PC-9 (cell line): ENCODE measurements at regions of chr5 and their contacts with region 1.

Region 1: DNA sequence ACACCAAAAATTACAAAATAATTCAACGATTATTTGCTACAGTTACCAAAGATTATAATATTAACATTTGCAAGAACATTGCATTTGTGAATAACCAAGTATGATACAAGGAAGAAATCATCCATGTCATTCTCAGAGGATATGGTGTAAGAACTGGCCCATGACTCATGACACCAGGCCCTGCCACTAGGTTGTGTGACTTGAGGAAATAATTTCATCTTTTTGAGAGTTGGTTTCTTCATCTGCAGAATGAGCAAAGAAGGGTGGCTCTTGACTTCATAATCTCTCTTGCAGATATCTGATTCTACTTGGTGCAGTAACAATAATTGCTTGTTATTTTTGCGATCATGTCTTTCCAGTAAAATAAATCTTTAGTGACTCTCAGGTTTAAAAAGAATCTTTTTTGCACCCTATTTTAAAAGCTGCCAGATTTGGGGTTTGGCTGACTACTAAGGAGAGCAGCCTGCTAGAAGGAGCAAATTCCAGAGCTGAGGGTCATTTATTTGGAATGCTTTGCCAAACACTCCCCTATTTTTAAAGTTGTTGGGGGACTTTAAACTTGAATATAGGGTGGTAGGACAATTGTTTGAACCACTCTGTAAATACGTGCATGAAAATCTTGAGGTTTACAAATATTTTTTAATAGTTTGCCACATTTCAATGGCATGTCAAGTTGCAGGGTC is 23.5 kb downstream of the ITGA1 start:
- DNase-seq: peak; percentile 28 to 87
- H3K4me3 ChIP-seq: no peak overlapping the region
- H3K27ac ChIP-seq: peak overlapping the region; percentile 72
- H3K4me1 ChIP-seq: peaks cover 50% of the 10 kb centered on the region
- H3K27me3 ChIP-seq: no peaks in the 10 kb centered on the region
- CTCF ChIP-seq: no peak

Region 2: GRCh38 chr5:52799983-52800393 is 11.2 kb before region 1 on chr5:
- CTCF ChIA-PET with region 1: no interaction called
- POLR2A ChIA-PET with region 1: interaction called, 4 read pairs
- intact Hi-C with region 1: loop called (anchors 1 kb)
- DNase-seq: peak; percentile 81 to 93
- H3K4me3 ChIP-seq: peak overlapping the region; percentile 68
- H3K27ac ChIP-seq: peak overlapping the region; percentile 99
- H3K4me1 ChIP-seq: peaks cover 39% of the 10 kb centered on the region
- H3K27me3 ChIP-seq: no peaks in the 10 kb centered on the region
- CTCF ChIP-seq: no peak

Region 3: DNA sequence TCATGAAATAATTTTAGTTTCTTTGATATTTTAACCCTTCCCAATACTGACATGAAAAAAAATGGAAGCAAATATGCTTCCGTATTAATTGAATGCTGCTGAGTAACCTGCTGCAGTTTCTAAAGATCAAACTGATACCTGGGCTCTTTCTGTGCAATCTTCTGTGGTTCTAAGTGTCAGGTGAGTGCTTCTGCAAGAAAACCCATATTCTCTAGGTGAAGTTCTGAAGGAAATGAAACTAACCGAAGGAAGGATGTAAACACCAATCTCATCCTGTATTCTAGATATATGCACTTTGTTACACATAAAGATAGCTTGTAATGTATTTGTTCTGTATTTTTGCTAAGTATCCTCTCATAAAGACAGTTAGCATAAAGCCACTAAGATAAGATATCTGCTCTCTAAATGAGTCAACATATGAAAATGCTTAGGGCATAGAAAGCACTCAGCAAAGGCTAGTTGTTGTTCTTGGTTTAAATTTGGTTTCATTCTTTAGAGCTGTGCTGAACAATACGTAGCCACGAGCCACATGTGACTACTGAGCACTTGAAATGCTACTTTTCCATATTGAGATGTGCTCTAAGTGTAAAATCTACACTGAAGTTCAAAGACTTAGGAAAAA is 230.0 kb after region 1 on chr5:
- CTCF ChIA-PET with region 1: no interaction called
- POLR2A ChIA-PET with region 1: no interaction called
- intact Hi-C with region 1: no loop called
- DNase-seq: no peak
- H3K4me3 ChIP-seq: no peak overlapping the region
- H3K27ac ChIP-seq: no peak overlapping the region
- H3K4me1 ChIP-seq: peaks cover 36% of the 10 kb centered on the region
- H3K27me3 ChIP-seq: no peaks in the 10 kb centered on the region
- CTCF ChIP-seq: no peak